Head of caudate nucleus (tissue), 42 donors: ENCODE measurements at regions of chr3 and their contacts with region 1.

Region 1: DNA sequence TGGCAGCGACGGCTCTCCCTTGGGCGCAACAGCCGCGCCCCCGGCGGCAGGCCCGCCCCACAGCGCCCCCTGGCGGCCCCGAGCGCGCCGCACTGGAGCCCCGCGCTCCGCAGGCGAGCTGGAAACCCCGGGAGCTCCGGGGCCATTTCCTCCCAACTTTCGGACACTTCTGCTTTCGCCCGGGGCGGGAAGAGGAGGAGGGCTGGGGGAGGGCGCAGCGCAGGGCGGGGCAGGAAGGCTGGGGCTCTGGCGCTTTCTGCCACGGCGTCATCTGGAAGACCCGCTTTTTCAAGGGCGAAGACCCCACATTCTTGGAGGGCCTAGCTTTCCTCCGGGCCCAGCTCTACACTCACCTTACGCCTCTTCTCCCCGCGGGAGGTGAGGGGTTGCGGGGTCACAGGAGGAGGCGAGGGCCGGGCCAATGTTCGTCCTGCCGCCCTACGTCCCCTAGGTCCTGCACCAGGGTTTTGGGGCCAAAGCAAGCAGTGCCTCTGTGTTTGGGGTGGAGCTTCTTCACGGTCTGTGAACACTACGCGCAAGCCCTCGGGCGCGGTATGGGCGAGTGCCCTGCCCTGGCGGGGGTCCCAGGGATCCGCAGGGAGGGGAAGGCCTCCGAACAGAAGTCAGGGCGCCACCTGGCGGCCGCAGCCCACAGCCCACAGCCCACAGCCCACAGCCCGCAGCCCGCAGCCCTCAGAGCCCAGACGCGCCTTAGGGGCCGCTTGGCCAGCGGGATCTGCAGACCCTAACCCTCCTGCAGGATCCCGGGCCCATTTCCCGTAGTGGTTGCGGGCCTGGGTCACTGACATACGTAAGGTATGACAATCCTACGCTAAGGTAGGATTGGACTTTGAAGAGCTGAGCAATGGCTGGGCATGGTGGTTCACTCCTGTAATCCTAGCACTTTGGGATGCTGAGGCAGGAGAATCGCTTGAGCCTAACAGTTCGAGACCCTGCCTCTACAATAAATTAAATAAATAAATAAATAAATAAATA is 31.1 kb downstream of the FOXL2 start:
- DNase-seq: peak; percentile 76 to 95 (median 91)

Region 2: DNA sequence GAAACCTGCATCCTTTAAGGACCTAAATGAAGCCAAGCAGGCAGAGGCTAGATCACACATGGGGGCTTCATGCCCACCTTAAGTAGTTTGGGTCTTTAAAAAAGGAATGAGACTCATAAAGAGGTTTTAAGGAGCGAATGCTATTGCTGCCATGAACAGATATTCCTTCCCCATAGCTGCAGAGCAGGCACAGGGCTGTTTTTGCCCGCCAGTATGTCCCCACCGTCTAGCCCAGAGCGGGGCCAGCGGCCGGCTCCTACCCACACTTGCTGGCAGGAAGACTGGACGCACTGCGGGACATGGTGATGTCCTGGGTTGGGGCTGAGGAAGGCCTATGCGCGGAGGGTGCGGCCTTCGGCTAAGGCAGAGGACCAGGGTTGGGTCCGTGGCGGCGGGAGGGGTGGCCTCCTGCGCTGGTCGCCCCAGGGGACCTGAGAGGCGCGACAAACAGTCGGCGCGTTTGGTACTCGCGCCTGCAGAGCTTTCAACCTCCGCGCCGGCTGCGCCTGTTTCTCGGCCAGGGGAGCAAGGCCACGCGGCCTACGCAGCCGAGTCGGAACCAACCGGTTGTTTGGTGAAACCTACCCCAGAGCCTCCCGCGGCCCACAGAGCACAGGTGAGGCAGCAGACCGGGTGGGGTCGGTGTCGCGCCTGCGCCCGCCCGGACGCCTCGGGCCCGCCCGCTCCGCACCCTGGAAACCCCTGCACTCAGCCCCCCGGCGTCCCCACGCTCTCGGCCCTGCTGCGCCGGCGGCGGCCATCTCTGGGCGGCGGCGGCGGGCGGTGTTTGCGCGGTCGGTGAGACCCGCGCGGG is 307.3 kb before region 1 on chr3 and contains the start of gene FAIM:
- intact Hi-C with region 1: loop called (anchors 5 kb)
- DNase-seq: peak; percentile 29 to 82 (median 68)

Region 3: DNA sequence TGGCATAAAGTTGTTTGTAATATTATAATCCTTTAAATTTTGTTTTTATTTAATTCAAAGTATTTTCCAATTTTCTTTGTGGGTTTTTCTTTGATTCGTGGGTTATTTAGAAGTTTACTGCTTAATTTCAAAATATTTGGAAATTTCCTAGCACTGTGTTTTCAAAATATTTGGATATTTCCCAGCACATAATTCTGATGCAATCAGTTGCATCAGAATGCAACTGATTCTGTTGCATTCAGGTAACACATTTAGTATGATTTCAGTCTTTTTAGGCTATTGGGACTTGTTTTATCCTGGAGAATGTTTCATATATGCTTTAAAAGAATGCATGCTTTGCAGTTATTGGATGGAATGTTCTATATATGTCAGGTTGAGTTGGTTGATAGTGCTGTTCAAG is 147.1 kb after region 1 on chr3:
- intact Hi-C with region 1: no loop called
- DNase-seq: no peak

Region 4: GRCh38 chr3:140323561-140323960 is 1407.8 kb after region 1 on chr3:
- intact Hi-C with region 1: no loop called
- DNase-seq: no peak